Motor neuron (in vitro differentiated cells): ENCODE measurements at regions of chr1 and their contacts with region 1.

Region 1: GRCh38 chr1:179706339-179706941 is 36.7 kb upstream of the FAM163A start:
- ATAC-seq: peak in 3 of 8 experiments; percentile 17 to 54 (median 17)
- H3K4me3 ChIP-seq: no peak overlapping the region
- H3K27ac ChIP-seq: no peak overlapping the region
- H3K4me1 ChIP-seq: peaks cover 14 to 32% of the 10 kb centered on the region in 2 donors

Region 2: DNA sequence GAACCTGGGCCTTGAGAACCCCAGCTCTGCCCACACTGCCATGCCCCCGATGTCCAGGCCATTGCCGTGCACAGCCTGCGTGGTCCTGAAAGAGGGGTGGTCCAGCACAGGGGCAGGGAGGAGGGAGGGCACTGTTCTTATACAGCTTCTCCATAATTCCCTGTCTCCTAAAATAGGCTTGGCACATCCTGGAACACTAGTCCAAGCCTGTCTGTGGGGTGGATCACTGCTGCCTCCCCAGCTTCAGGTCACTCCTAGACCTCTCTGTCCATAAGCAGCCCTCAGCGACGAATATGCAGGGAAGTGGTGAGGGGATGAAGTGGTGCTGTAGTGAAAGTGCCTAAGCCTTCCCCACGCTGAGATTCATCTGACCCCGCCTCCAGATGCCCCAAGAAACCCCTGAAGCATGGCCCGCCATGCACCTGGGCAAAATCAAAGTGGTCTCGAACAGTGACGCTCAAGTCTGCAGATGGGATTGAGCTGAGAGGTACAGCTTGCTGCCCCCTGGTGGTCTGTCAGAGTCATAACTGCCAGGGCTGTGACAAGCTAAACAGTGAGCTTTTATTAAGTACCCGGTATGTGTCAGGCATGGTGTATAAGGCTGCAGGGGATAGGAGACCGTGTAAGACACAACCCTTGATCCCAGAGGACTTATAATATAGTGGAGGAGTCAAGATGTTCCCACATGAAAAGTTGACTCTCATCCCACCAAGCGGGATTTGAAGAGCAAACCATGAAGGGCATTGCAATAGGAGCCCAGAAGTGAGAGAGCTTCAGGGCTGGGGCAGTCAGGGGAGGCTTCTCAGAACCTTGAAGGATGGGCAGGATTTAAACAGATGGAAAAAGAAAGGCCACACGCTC is 103.3 kb after region 1 on chr1:
- in situ Hi-C with region 1: loop called in 8 of 9 experiments (anchors 5 to 25 kb)
- ATAC-seq: peak; percentile 43 to 67 (median 54)
- H3K4me3 ChIP-seq: no peak overlapping the region
- H3K27ac ChIP-seq: no peak overlapping the region
- H3K4me1 ChIP-seq: peaks cover 28% of the 10 kb centered on the region in 2 donors